AG04449 (cell line): ENCODE measurements at regions of chr5 and their contacts with region 1.

Region 1: GRCh38 chr5:157476702-157477408 is 16.8 kb downstream of the NIPAL4 start:
- DNase-seq: peak; percentile 29
- H3K4me3 ChIP-seq: no peak overlapping the region
- CTCF ChIP-seq: peak; percentile 73

Region 2: GRCh38 chr5:156715287-156715686 is 761.6 kb before region 1 on chr5:
- CTCF ChIA-PET with region 1: no interaction called
- POLR2A ChIA-PET with region 1: no interaction called
- DNase-seq: no peak
- H3K4me3 ChIP-seq: no peak overlapping the region
- CTCF ChIP-seq: no peak

Region 3: GRCh38 chr5:157130925-157131324 is 345.9 kb before region 1 on chr5:
- CTCF ChIA-PET with region 1: no interaction called
- POLR2A ChIA-PET with region 1: no interaction called
- DNase-seq: no peak
- H3K4me3 ChIP-seq: no peak overlapping the region
- CTCF ChIP-seq: no peak

Region 4: DNA sequence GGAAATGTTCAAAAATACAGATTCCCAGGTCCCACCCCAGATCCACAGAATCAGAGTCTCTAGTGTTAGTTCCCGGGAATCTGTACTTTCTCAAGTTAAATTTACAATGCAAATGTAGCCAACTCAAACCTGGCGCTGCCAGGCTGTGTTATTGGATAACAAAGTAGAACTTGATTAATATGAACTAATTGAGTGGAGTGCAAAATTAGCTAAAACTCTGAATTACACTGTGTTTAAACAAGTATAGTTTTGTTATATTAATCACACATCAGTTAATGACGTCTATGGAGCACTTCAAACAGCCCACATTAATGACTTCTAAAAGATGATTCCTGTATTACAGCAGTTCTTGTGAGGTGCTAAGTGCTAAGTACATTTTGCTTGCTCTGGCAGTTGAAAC is 243.3 kb before region 1 on chr5:
- CTCF ChIA-PET with region 1: no interaction called
- POLR2A ChIA-PET with region 1: no interaction called
- DNase-seq: no peak
- H3K4me3 ChIP-seq: no peak overlapping the region
- CTCF ChIP-seq: no peak

Region 5: DNA sequence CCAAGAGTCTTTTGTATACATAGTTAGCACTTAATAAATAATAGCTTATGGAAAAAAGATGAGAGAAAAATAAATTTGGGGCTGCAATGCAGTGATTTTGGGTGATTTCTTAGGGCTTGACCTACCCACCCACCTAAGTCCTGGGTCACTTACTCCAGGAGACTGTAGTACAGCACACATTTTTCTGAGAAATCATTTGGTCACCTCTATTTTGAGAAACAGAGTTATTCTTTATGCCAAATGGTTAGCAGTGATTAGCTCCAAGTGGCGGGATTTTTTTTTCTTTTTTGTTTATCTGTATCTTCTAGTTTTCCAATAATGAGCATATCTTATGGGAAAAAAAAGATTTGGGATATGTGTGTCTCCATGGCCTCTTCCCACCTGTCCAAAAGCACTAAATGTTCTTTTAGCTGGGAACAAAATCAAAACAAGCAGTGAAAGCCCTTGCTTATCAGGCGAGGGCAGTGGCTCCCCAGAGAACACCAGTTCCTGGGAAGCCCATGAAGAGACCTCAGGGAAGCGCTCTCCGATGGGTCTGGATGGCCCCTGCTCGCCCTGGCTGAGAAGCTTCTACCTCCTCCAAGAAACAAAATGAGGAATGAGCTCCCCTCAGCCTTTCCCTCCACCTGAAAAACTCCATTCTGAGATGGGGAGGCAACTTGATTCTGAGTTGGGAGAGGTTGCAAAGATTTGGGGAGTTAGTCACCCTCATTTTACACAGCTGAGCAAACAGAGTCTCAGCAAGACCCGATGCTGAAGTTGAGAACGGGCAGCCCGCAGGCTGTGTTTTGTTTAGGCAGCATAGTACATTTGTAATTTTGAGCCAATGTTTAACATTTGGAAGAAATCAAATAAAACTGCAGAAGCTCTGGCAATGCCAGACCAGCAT is 141.1 kb before region 1 on chr5:
- CTCF ChIA-PET with region 1: interaction called, 272 read pairs
- POLR2A ChIA-PET with region 1: no interaction called
- DNase-seq: peak; percentile 28
- H3K4me3 ChIP-seq: no peak overlapping the region
- CTCF ChIP-seq: no peak

Region 6: DNA sequence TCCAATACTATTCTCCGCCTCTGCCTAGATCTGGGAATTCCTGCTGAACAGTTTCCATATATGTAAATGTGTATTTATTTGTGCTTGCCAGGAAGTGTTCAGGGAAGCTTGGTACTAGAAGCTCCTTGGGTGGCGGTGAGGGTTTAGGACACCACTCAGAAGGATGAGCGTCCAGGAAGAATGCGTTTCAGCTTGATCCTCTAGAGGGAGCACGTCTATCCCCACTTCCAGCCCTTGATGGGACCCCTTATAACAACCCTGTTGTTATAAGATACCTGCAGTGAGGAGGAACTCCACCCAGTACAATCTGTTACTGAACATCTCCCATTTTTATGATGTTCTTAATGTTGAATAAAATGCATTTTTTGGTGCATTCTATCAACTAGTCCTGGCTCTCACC is 122.1 kb before region 1 on chr5:
- CTCF ChIA-PET with region 1: interaction called, 169 read pairs
- POLR2A ChIA-PET with region 1: no interaction called
- DNase-seq: no peak
- H3K4me3 ChIP-seq: no peak overlapping the region
- CTCF ChIP-seq: peak; percentile 34

Region 7: DNA sequence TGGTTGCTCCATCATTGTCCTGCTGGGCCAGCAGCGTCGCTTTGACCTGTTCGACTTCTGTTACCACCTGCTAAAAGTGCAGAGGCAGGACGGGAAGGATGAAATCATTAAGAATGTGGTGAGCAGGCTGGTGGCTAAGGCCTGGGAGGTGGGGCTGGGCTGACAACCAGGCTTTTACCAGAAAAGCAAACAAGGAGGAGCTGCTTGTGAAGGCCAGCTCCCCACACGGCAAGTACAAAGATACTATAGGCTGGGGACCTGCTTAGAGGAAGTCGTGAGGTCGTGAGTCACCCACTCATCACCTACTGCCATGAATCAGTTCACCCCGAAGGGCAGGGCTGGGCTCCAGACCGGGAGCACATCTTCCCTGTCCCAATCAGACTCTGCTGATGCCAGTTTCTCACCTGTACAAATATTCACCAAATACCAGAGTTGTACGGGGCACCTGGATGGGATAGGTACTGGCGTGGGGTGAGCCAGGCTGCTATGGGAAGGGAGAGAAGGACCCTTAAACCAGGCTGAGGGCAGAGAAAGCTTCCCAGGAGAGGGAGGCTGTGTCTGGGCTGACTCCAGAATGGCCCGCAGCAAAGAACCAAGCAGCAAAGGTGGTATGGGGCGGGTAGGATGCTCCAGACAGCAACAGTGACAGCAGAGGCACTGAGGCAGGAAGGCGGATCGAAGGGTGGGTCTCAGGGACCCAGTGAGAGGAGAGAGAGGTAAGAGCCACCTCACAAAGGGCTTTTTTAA is 86.1 kb before region 1 on chr5:
- CTCF ChIA-PET with region 1: interaction called, 18 read pairs
- POLR2A ChIA-PET with region 1: no interaction called
- DNase-seq: peak; percentile 82
- H3K4me3 ChIP-seq: no peak overlapping the region
- CTCF ChIP-seq: no peak

Region 8: GRCh38 chr5:157877821-157878220 is 401.0 kb after region 1 on chr5:
- CTCF ChIA-PET with region 1: no interaction called
- POLR2A ChIA-PET with region 1: no interaction called
- DNase-seq: no peak
- H3K4me3 ChIP-seq: no peak overlapping the region
- CTCF ChIP-seq: no peak